ENCODE measurements at regions of chr1 and their contacts with region 1.

Region 1: GRCh38 chr1:94854458-94855306 is 34.5 kb downstream of the SLC44A3 start:
- DNase-seq: peak; percentile 88
- H3K4me3 ChIP-seq: peak overlapping the region in 3 of 4 donors; percentile 23 to 48 (median 26)
- H3K27ac ChIP-seq: peak overlapping the region; percentile 73 to 87 (median 82)
- H3K4me1 ChIP-seq: peaks cover 4 to 24% (median 14%) of the 10 kb centered on the region in 4 donors
- H3K27me3 ChIP-seq: no peaks in the 10 kb centered on the region
- CTCF ChIP-seq: peak; percentile 82 to 97 (median 87)
- EP300 ChIP-seq: no peak
- POLR2A ChIP-seq: no peak

Region 2: DNA sequence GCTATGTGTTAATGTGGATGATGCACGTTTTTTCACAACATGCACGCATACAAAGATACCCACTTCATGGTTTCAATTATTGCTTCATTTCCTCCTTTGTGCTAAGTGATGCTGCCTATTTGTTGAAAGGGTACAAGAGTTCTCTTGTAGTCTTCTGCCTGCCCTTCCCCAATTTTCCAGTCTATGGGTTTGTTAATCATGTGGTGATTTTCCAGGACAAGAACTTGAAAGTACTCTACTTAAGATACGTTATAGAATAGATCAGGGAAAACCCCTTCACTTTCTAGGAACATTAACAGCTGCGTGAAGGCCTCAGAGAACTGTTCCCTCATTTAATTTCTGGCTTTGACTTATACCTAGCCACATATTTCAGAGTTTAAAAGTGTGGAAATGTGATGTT is 86.6 kb before region 1 on chr1:
- in situ Hi-C with region 1: no loop called
- intact Hi-C with region 1: no loop called
- DNase-seq: no peak
- H3K4me3 ChIP-seq: no peak overlapping the region
- H3K27ac ChIP-seq: no peak overlapping the region
- H3K4me1 ChIP-seq: no peaks in the 10 kb centered on the region
- H3K27me3 ChIP-seq: no peaks in the 10 kb centered on the region
- CTCF ChIP-seq: no peak
- EP300 ChIP-seq: no peak
- POLR2A ChIP-seq: no peak

Region 3: DNA sequence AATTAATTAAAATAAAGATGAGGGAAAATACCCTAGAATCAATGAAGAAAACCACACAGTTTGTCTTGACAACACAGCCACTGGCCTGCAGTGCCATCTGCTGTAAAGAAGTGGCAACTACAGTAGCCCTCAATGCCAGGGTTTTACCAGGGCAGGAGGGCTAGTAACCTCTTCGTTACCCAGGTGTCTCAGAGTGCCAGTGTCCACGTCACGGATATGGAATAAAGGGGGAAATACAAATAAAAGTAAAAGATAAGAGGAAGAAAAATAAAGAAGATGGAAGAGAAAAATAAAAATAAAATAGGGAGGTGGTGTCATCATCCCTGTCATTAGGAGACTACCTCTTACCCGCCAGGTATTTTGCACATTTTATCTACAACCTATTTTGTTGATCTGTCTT is 48.8 kb before region 1 on chr1:
- in situ Hi-C with region 1: no loop called
- intact Hi-C with region 1: no loop called
- DNase-seq: peak; percentile 55
- H3K4me3 ChIP-seq: no peak overlapping the region
- H3K27ac ChIP-seq: peak overlapping the region; percentile 44 to 75 (median 66)
- H3K4me1 ChIP-seq: peaks cover 27 to 82% (median 53%) of the 10 kb centered on the region in 4 donors
- H3K27me3 ChIP-seq: no peaks in the 10 kb centered on the region
- CTCF ChIP-seq: peak; percentile 97 to 100 (median 99)
- EP300 ChIP-seq: no peak
- POLR2A ChIP-seq: no peak

Region 4: GRCh38 chr1:94909486-94909885 is 54.8 kb after region 1 on chr1:
- in situ Hi-C with region 1: no loop called
- intact Hi-C with region 1: no loop called
- DNase-seq: no peak
- H3K4me3 ChIP-seq: no peak overlapping the region
- H3K27ac ChIP-seq: no peak overlapping the region
- H3K4me1 ChIP-seq: peaks cover 10 to 61% (median 25%) of the 10 kb centered on the region in 4 donors
- H3K27me3 ChIP-seq: no peaks in the 10 kb centered on the region
- CTCF ChIP-seq: no peak
- EP300 ChIP-seq: no peak
- POLR2A ChIP-seq: no peak

Region 5: GRCh38 chr1:94926915-94927404 is 72.3 kb after region 1 on chr1 and contains the start of gene CNN3:
- in situ Hi-C with region 1: no loop called
- intact Hi-C with region 1: loop called (anchors 2 kb)
- DNase-seq: peak; percentile 94
- H3K4me3 ChIP-seq: peak within 1 kb of the TSS; percentile 81 to 89 (median 84)
- H3K27ac ChIP-seq: peak within 1 kb of the TSS; percentile 96 to 99 (median 98)
- H3K4me1 ChIP-seq: peaks cover 10 to 76% (median 62%) of the 10 kb centered on the region in 4 donors
- H3K27me3 ChIP-seq: no peaks in the 10 kb centered on the region
- CTCF ChIP-seq: no peak
- EP300 ChIP-seq: no peak
- POLR2A ChIP-seq: peak; percentile 98
- total RNA-seq, gene CNN3: 22.4 to 96.2 (median 59.7) TPM

Measured in transverse colon (tissue), 4 donors.